ENCODE measurements at regions of chr6 and their contacts with region 1.

Region 1: DNA sequence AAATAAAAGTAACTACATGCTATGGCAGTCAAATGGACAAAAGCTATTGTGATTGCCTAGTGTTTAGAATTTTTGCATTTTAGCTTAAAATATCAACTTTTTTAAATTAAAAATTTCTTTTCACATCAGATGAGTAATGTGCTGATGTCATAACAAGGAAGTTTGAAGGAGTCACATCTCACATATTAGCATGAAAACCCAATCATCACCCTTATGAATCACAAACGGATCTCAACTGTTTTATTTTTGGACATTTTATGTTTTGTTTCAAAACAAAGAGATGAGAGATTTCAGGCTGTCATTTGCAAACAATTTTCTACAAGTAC is 53.6 kb upstream of the TRERF1 start:
- DNase-seq: no peak
- ATAC-seq: no peak
- H3K4me3 ChIP-seq: no peak overlapping the region
- H3K27ac ChIP-seq: no peak overlapping the region
- H3K4me1 ChIP-seq: no peaks in the 10 kb centered on the region
- H3K27me3 ChIP-seq: no peaks in the 10 kb centered on the region
- CTCF ChIP-seq: no peak
- POLR2A ChIP-seq: no peak

Region 2: GRCh38 chr6:42387336-42387735 is 118.0 kb before region 1 on chr6:
- intact Hi-C with region 1: loop called in 1 of 10 experiments (anchors 10 kb)
- DNase-seq: no peak
- ATAC-seq: no peak
- H3K4me3 ChIP-seq: no peak overlapping the region
- H3K27ac ChIP-seq: peak overlapping the region in 1 of 12 donors; percentile 83
- H3K4me1 ChIP-seq: peaks cover 0 to 44% (median 0%) of the 10 kb centered on the region in 12 donors
- H3K27me3 ChIP-seq: no peaks in the 10 kb centered on the region
- CTCF ChIP-seq: no peak
- POLR2A ChIP-seq: no peak

Region 3: DNA sequence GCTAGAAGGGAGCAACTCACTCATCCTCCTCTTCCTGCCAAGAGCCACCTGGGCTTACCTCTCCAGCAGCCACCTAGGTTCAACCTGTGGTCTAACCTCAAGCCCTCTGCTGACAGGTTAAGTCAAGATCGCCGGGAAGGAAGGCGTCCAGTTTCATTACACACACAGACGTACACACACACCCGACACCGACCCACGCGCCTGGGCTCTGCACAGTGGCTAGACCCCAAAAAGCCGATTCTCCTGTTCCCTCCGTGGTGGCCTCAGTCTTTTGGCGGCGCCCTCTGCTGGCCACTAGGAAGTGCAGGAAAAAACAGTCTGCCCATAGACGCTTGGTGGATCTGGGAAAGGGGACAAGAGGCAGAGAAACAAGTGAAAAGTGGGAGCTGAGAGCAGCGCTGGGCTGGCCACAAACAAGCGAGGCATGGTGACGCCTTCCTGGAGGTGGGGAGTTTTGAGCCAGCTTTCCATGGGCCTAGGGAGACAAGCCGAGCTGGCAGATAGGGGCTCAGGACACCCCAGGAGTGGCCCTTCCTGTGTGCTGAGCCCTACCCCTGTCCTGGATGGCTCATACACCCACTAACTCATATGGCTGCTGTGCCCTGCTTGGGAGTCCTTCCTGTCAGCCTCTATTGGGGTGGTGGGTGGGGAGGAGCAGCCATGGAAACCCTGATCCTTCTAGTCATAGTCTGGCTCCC is 1569.2 kb after region 1 on chr6:
- intact Hi-C with region 1: no loop called
- DNase-seq: peak; percentile 64 to 86 (median 78)
- ATAC-seq: peak; percentile 54 to 75 (median 65)
- H3K4me3 ChIP-seq: peak overlapping the region in 8 of 12 donors; percentile 20 to 61 (median 54)
- H3K27ac ChIP-seq: peak overlapping the region in 11 of 12 donors; percentile 61 to 91 (median 85)
- H3K4me1 ChIP-seq: peaks cover 12 to 58% (median 38%) of the 10 kb centered on the region in 12 donors
- H3K27me3 ChIP-seq: peaks cover 0 to 10% (median 0%) of the 10 kb centered on the region in 9 donors
- CTCF ChIP-seq: peak; percentile 82 to 96 (median 90)
- POLR2A ChIP-seq: no peak